ENCODE measurements at regions of chr6 and their contacts with region 1.

Region 1: DNA sequence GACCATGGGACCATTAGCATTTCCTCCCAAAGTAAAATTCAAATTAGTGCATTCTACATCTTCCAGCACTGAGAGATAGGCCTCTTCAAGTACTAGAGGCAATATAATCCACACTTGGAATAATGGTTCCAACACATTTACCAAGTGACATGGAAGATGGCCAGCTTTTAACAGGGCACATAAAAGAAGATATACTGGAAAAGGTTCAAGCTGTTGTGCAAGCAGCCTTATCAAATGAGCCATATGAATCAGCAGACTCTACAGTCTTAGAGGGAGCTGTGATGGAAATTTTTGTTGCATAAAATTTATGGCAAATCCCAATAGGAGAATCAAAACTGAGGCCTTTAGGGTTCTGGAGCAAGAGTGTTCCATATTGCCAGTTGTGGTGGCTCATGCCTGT is 526.6 kb upstream of the IRAK1BP1 start:
- DNase-seq: no peak
- CTCF ChIP-seq: no peak

Region 2: GRCh38 chr6:77573843-77574242 is 766.9 kb before region 1 on chr6:
- in situ Hi-C with region 1: no loop called
- DNase-seq: no peak
- CTCF ChIP-seq: no peak

Region 3: GRCh38 chr6:78031228-78031627 is 309.5 kb before region 1 on chr6:
- in situ Hi-C with region 1: no loop called
- DNase-seq: no peak
- CTCF ChIP-seq: no peak

Region 4: DNA sequence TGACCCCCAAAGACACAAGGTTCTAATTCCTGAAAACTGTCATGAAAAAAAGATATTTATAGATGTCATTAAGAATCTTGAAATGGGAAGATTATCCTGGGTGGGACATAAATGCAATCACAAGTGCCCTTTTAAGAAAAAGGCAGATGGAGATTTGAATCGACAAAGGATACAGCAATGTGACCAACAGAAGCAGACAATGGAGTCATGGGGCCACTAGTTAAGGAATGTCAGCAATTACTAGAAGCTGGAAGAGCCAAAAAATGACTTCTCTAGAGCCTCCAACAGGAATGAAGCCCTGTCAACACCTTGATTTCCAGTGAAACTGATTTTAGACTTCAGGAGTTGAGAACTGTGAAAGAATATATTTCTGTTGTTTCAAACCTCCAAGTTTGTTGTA is 239.4 kb before region 1 on chr6:
- in situ Hi-C with region 1: no loop called
- DNase-seq: no peak
- CTCF ChIP-seq: no peak

Region 5: GRCh38 chr6:78253618-78254017 is 87.1 kb before region 1 on chr6:
- in situ Hi-C with region 1: loop called (anchors 10 kb)
- DNase-seq: peak; percentile 1
- CTCF ChIP-seq: no peak

Measured in GM13977 (cell line).